ENCODE measurements at regions of chr7 and their contacts with region 1.

Region 1: DNA sequence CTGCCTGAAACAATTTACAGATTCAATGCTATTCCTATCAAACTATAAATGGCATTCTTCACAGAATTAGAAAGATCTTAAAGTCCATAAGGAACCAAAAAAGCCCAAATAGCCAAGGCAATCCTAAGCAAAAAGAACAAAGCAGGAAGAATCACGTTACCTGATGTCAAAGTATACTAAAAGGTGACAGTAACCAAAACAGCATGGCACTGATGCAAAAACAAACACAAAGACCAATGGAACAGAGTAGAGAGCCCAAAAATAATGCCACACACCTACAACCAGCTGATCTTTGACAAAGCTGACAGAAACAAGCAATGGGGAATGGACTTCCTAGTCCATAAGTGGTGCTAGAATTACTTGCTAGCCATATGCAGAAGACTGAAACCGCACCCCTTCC is 166.0 kb downstream of the KMT2E start:
- DNase-seq: no peak
- ATAC-seq: no peak
- H3K4me3 ChIP-seq: no peak overlapping the region
- H3K4me3 Mint-ChIP-seq: no peak overlapping the region
- H3K27ac ChIP-seq: no peak overlapping the region
- H3K27ac Mint-ChIP-seq: no peak overlapping the region
- H3K4me1 ChIP-seq: no peaks in the 10 kb centered on the region
- H3K4me1 Mint-ChIP-seq: peaks cover 6% of the 10 kb centered on the region
- H3K27me3 ChIP-seq: no peaks in the 10 kb centered on the region
- H3K27me3 Mint-ChIP-seq: no peaks in the 10 kb centered on the region
- CTCF ChIP-seq: no peak

Region 2: GRCh38 chr7:104878577-104878976 is 301.4 kb before region 1 on chr7:
- CTCF ChIA-PET with region 1: no interaction called
- POLR2A ChIA-PET with region 1: no interaction called
- intact Hi-C with region 1: no loop called
- DNase-seq: no peak
- ATAC-seq: no peak
- H3K4me3 ChIP-seq: no peak overlapping the region
- H3K4me3 Mint-ChIP-seq: no peak overlapping the region
- H3K27ac ChIP-seq: no peak overlapping the region
- H3K27ac Mint-ChIP-seq: no peak overlapping the region
- H3K4me1 ChIP-seq: peaks cover 0 to 2% of the 10 kb centered on the region in 2 donors
- H3K4me1 Mint-ChIP-seq: peaks cover 2% of the 10 kb centered on the region
- H3K27me3 ChIP-seq: no peaks in the 10 kb centered on the region
- H3K27me3 Mint-ChIP-seq: peaks cover 14% of the 10 kb centered on the region
- CTCF ChIP-seq: no peak

Region 3: GRCh38 chr7:105219780-105220160 is 39.8 kb after region 1 on chr7:
- CTCF ChIA-PET with region 1: no interaction called
- POLR2A ChIA-PET with region 1: no interaction called
- intact Hi-C with region 1: loop called (anchors 5 kb)
- DNase-seq: no peak
- ATAC-seq: no peak
- H3K4me3 ChIP-seq: no peak overlapping the region
- H3K4me3 Mint-ChIP-seq: no peak overlapping the region
- H3K27ac ChIP-seq: no peak overlapping the region
- H3K27ac Mint-ChIP-seq: no peak overlapping the region
- H3K4me1 ChIP-seq: peaks cover 2 to 6% of the 10 kb centered on the region in 2 donors
- H3K4me1 Mint-ChIP-seq: peaks cover 51% of the 10 kb centered on the region
- H3K27me3 ChIP-seq: no peaks in the 10 kb centered on the region
- H3K27me3 Mint-ChIP-seq: no peaks in the 10 kb centered on the region
- CTCF ChIP-seq: no peak

Measured in B cell (primary cell).